ENCODE measurements at regions of chr5 and their contacts with region 1.

Region 1: DNA sequence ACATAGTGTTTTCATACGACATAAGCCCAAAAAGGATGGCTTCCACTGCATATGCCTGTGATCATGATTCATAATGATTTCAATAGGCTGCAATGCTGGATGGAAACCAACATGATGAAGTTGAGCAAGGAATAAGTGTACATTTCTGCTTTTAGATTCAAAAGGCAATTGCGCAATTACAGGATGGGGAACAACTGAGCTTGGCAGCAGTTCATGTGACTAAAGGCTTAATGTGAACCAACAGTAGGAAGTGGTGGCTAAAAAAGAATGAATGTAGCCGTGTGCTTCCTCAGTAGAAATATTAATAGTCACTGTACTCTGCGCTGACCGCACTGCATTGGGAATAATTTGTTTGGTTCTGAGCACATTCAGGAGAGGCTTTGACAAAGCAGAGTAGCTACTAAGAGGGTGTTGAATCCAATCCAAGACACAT is 51.2 kb downstream of the SLC1A3 start:
- DNase-seq: peak; percentile 84 to 85
- ATAC-seq: peak; percentile 85 to 88
- H3K4me3 ChIP-seq: peak overlapping the region in 2 of 4 donors; percentile 6 to 23
- H3K27ac ChIP-seq: peak overlapping the region; percentile 85 to 89 (median 87)
- H3K4me1 ChIP-seq: peaks cover 56 to 57% of the 10 kb centered on the region in 2 donors
- H3K27me3 ChIP-seq: no peaks in the 10 kb centered on the region
- CTCF ChIP-seq: no peak
- POLR2A ChIP-seq: peak in 1 of 2 donors; percentile 55

Region 2: DNA sequence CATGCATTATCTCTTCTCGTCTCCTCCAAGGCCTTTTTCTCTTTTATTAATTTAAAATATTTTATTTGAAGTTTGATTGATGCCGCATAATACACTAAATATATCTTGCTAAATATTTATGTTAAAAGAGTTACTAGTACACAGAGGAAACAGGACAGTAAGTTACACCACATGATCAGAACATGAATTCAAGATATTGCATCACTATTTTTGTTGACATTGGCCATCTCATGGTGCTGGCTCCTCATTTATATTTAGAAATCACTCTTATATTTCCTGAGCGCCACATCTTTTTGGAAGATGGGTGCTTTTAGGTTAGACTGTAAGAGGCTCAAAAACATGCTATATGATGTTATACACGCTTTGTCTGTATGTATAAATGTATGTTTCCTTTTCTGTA is 1017.0 kb before region 1 on chr5:
- in situ Hi-C with region 1: no loop called
- intact Hi-C with region 1: no loop called
- DNase-seq: no peak
- ATAC-seq: no peak
- H3K4me3 ChIP-seq: no peak overlapping the region
- H3K27ac ChIP-seq: no peak overlapping the region
- H3K4me1 ChIP-seq: no peaks in the 10 kb centered on the region
- H3K27me3 ChIP-seq: no peaks in the 10 kb centered on the region
- CTCF ChIP-seq: no peak
- POLR2A ChIP-seq: no peak

Region 3: DNA sequence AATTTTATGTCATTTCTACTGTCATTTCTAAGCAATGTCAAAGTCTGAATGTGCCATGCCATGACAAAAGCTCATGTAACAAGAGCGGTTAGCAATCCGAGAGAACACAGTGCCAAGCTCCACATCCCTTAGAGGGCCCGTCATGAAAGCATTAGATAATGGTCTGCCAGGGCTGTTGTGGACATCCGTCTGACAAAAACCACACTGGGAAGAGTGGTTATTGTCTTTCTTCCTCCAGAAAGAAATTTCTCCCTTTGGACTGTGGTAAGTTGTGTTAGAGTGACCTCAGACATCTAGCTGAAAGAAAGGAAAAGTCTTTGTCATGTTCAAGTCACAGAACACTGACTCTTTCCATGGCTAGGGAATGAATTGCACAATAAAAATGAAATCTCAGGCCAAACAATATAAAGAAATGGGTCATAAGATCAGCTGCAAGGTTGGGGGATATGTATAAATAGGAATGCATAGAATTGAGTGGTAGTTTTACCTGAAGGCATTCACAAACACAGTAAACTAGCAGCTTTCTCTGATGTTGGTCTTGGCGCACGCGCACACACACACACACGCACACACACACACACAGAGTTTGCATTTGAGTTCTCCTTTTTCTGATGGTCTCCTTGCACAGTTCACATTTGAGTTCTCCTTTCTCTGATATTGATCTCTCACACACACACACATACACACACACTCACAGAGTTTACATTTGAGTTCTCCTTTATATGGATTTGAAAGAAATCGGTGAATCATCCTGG is 45.9 kb before region 1 on chr5:
- in situ Hi-C with region 1: no loop called
- intact Hi-C with region 1: loop called (anchors 2 kb)
- DNase-seq: peak in 1 of 2 donors; percentile 46
- ATAC-seq: peak in 1 of 2 donors; percentile 31
- H3K4me3 ChIP-seq: no peak overlapping the region
- H3K27ac ChIP-seq: peak overlapping the region; percentile 21 to 89 (median 46)
- H3K4me1 ChIP-seq: peaks cover 33 to 42% of the 10 kb centered on the region in 2 donors
- H3K27me3 ChIP-seq: no peaks in the 10 kb centered on the region
- CTCF ChIP-seq: no peak
- POLR2A ChIP-seq: no peak

Measured in gastrocnemius medialis (tissue), 4 donors.